ENCODE measurements at regions of chr10 and their contacts with region 1.

Region 1: GRCh38 chr10:35872671-35873070 is 230.6 kb upstream of the FZD8 start:
- DNase-seq: no peak
- H3K4me3 ChIP-seq: no peak overlapping the region
- H3K27ac ChIP-seq: no peak overlapping the region
- H3K4me1 ChIP-seq: no peaks in the 10 kb centered on the region
- CTCF ChIP-seq: no peak

Region 2: DNA sequence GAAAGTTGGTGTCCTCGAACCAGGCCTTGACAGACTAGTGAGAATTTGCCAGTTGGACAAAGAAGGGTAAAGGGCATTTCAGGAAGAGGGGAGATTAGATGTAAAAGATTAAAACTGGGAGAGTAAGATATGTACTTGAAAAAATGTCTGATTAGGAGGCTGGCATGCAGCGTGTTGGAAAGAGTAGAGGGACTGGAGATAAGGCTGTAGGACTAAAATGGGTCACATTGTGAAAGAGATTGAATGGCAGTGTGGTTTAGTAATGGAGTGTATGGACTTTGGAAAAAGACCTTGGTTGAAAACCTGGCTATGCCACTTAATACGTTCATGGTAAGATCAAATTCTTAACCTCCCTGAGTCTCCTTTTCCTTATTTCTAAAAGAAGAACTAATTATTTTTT is 731.9 kb before region 1 on chr10:
- CTCF ChIA-PET with region 1: no interaction called
- POLR2A ChIA-PET with region 1: no interaction called
- intact Hi-C with region 1: no loop called
- DNase-seq: no peak
- H3K4me3 ChIP-seq: no peak overlapping the region
- H3K27ac ChIP-seq: no peak overlapping the region
- H3K4me1 ChIP-seq: peaks cover 12% of the 10 kb centered on the region
- CTCF ChIP-seq: no peak

Region 3: DNA sequence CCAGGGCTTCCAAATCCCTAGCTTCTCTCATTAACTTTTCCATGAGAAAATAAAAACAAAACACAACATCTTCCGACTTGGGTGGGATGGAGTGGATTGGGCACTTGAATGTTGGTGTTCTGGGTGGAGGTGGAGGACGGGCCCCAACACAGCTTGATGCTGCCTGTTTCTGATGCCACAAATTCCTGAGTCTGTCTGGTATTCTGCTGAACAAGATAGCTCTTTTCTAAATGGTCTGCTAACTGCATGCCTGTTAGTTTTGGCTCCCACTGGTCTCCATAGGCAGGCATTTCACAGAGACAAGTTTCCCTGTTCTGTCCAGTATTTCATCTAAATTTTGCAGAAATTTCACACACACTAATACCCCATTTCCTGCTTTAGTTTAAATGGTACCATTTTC is 69.6 kb before region 1 on chr10:
- CTCF ChIA-PET with region 1: no interaction called
- POLR2A ChIA-PET with region 1: no interaction called
- intact Hi-C with region 1: no loop called
- DNase-seq: no peak
- H3K4me3 ChIP-seq: no peak overlapping the region
- H3K27ac ChIP-seq: no peak overlapping the region
- H3K4me1 ChIP-seq: no peaks in the 10 kb centered on the region
- CTCF ChIP-seq: no peak

Region 4: DNA sequence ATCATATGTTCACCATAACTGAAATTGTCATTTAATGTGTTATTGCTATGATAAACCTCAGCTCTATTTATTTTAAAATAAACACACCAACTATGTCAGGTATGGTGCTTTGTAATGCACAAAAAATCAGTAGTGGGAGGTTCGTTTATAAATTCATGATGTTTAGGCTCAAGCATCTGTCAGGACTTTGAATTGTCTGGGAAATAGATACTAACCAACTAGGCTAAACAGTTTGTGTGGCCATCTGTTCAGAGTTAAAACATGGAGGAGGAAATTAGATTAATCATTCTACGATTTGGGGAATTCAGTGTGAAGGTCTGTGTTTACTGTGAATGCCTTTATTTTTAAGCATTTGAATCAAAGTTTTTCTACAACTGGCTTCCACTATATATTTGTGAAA is 18.0 kb before region 1 on chr10:
- CTCF ChIA-PET with region 1: no interaction called
- POLR2A ChIA-PET with region 1: no interaction called
- intact Hi-C with region 1: loop called (anchors 2 kb)
- DNase-seq: no peak
- H3K4me3 ChIP-seq: no peak overlapping the region
- H3K27ac ChIP-seq: no peak overlapping the region
- H3K4me1 ChIP-seq: no peaks in the 10 kb centered on the region
- CTCF ChIP-seq: no peak

Region 5: DNA sequence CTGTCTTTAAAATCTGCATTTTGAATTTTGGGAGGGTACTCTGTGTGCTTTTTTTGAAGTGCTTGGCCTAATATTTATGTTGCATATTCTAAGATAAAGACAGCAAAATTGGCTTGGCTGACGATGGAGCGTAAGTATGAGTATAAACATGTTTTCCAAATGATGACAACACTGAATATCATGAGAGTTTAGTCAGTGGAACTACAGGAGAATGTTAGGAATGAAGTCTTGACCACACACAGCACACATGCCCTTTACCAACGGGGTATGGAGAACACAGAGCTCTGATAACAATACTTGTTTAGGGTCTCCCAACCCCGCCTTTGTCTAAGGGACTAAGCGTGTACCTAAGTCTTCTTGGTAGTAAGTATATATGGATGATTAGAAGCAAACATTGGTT is 23.3 kb after region 1 on chr10:
- CTCF ChIA-PET with region 1: no interaction called
- POLR2A ChIA-PET with region 1: no interaction called
- intact Hi-C with region 1: no loop called
- DNase-seq: no peak
- H3K4me3 ChIP-seq: no peak overlapping the region
- H3K27ac ChIP-seq: no peak overlapping the region
- H3K4me1 ChIP-seq: no peaks in the 10 kb centered on the region
- CTCF ChIP-seq: no peak

Measured in OCI-LY7 (cell line).